Caco-2 (cell line): ENCODE measurements at regions of chr4 and their contacts with region 1.

Region 1: GRCh38 chr4:83252782-83253405 is 31.7 kb downstream of the COQ2 start:
- DNase-seq: peak; percentile 69 to 72
- H3K4me3 ChIP-seq: no peak overlapping the region
- H3K4me3 Mint-ChIP-seq: no peak overlapping the region
- H3K27ac Mint-ChIP-seq: no peak overlapping the region
- H3K4me1 ChIP-seq: peaks cover 28% of the 10 kb centered on the region
- H3K4me1 Mint-ChIP-seq: peaks cover 8% of the 10 kb centered on the region
- H3K27me3 ChIP-seq: no peaks in the 10 kb centered on the region
- H3K27me3 Mint-ChIP-seq: no peaks in the 10 kb centered on the region
- CTCF ChIP-seq: peak; percentile 48 to 52

Region 2: GRCh38 chr4:83074086-83074704 is 178.7 kb before region 1 on chr4:
- CTCF ChIA-PET with region 1: interaction called, 5 read pairs
- POLR2A ChIA-PET with region 1: no interaction called
- intact Hi-C with region 1: loop called (anchors 2 kb)
- DNase-seq: peak; percentile 46 to 66
- H3K4me3 ChIP-seq: no peak overlapping the region
- H3K4me3 Mint-ChIP-seq: no peak overlapping the region
- H3K27ac Mint-ChIP-seq: no peak overlapping the region
- H3K4me1 ChIP-seq: no peaks in the 10 kb centered on the region
- H3K4me1 Mint-ChIP-seq: no peaks in the 10 kb centered on the region
- H3K27me3 ChIP-seq: no peaks in the 10 kb centered on the region
- H3K27me3 Mint-ChIP-seq: no peaks in the 10 kb centered on the region
- CTCF ChIP-seq: peak; percentile 43 to 55

Region 3: DNA sequence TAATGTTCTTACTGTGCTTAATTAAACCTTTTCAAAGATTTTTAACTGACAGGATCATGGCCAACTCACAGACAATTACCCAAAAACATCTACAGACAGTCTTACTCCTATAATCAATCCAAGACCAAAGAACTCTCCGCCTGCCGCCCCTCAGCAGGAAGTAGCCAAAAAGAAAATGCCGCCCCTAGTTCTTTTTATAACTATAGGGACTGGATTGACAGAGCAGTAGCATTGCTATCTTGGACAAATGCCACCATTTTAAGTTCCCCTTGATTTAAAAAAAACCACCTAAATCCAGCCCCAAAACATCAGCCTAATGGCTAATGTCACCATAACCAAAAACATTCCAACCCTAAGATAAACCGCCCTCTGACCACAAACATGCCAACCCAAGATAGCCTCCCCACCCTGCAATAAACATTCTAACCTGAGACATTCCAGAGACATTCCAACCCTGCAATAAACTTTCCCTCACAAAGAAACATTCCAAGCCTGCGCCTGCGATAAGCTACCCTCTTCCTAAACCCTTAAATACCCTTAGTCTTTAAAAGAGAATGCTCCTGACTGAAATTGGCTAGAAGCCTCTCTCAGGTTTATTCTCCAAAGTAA is 45.3 kb before region 1 on chr4:
- CTCF ChIA-PET with region 1: no interaction called
- POLR2A ChIA-PET with region 1: no interaction called
- intact Hi-C with region 1: loop called (anchors 1 kb)
- DNase-seq: peak; percentile 75 to 81
- H3K4me3 ChIP-seq: no peak overlapping the region
- H3K4me3 Mint-ChIP-seq: peak overlapping the region; percentile 67
- H3K27ac Mint-ChIP-seq: no peak overlapping the region
- H3K4me1 ChIP-seq: peaks cover 27% of the 10 kb centered on the region
- H3K4me1 Mint-ChIP-seq: peaks cover 18% of the 10 kb centered on the region
- H3K27me3 ChIP-seq: no peaks in the 10 kb centered on the region
- H3K27me3 Mint-ChIP-seq: no peaks in the 10 kb centered on the region
- CTCF ChIP-seq: no peak

Region 4: DNA sequence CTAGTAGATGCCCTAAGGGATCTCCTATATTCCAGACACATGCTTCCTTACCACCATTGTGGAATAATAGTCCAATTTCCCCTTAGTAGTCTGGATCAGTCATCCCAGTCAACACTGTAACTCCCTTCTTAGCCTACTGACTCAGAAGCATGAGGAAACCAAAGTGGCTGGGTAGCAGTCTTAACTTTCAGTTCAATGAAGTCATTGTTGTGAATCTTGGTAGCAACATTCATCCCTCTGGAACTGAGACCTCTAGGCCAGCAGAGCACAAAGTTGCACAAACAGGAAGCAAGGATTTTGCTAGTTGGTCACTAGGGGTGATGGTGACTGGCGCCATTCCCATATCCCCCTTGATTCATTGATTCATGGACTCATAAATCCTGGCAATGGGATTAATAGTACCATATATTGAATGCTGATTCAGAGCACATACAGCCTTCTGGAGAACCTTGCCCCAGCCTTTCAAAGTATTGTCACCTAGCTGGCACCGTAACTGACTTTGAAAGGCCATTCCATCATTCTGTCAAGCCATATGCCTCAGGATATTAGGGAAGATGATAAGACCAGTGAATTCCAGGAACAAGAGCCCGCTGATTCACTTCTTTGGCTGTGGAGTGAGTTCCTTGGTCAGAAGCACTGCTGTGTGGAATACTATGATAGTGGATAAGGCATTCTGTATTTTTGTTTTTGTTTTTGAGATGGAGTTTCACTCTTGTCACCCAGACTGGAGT is 263.3 kb after region 1 on chr4:
- CTCF ChIA-PET with region 1: no interaction called
- POLR2A ChIA-PET with region 1: no interaction called
- intact Hi-C with region 1: no loop called
- DNase-seq: no peak
- H3K4me3 ChIP-seq: no peak overlapping the region
- H3K4me3 Mint-ChIP-seq: no peak overlapping the region
- H3K27ac Mint-ChIP-seq: no peak overlapping the region
- H3K4me1 ChIP-seq: no peaks in the 10 kb centered on the region
- H3K4me1 Mint-ChIP-seq: no peaks in the 10 kb centered on the region
- H3K27me3 ChIP-seq: no peaks in the 10 kb centered on the region
- H3K27me3 Mint-ChIP-seq: no peaks in the 10 kb centered on the region
- CTCF ChIP-seq: no peak